H1 (cell line): ENCODE measurements at regions of chr17 and their contacts with region 1.

Region 1: GRCh38 chr17:42577532-42578281 is at the start of gene PSMC3IP:
- DNase-seq: peak; percentile 84 to 94
- H3K4me3 ChIP-seq: peak within 1 kb of the TSS; percentile 80 to 99 (median 90)
- H3K27ac ChIP-seq: peak within 1 kb of the TSS; percentile 79
- H3K4me1 ChIP-seq: no peaks in the 10 kb centered on the region
- H3K27me3 ChIP-seq: no peaks in the 10 kb centered on the region
- CTCF ChIP-seq: peak; percentile 44 to 58 (median 57)
- EP300 ChIP-seq: no peak
- POLR2A ChIP-seq: peak; percentile 60 to 76
- RAD21 ChIP-seq: peak in 1 of 2 experiments; percentile 18; a peak in 1 of 4 replicates
- total RNA-seq, gene PSMC3IP: 21.9 and 22.7 TPM in 2 replicates

Region 2: GRCh38 chr17:42373896-42374295 is 203.8 kb before region 1 on chr17:
- CTCF ChIA-PET with region 1: no interaction called
- POLR2A ChIA-PET with region 1: no interaction called
- DNase-seq: no peak
- H3K4me3 ChIP-seq: no peak overlapping the region
- H3K27ac ChIP-seq: no peak overlapping the region
- H3K4me1 ChIP-seq: peaks cover 0 to 5% (median 1%) of the 10 kb centered on the region in 4 experiments; a peak in 3 of 7 replicates
- H3K27me3 ChIP-seq: no peaks in the 10 kb centered on the region
- CTCF ChIP-seq: no peak
- EP300 ChIP-seq: no peak
- POLR2A ChIP-seq: no peak
- RAD21 ChIP-seq: no peak

Region 3: GRCh38 chr17:42548070-42548837 is 29.5 kb before region 1 on chr17:
- CTCF ChIA-PET with region 1: interaction called, 15 read pairs
- POLR2A ChIA-PET with region 1: interaction called, 4 read pairs
- DNase-seq: peak; percentile 82 to 97
- H3K4me3 ChIP-seq: peak overlapping the region; percentile 31 to 61 (median 37)
- H3K27ac ChIP-seq: no peak overlapping the region
- H3K4me1 ChIP-seq: peaks cover 0 to 8% (median 7%) of the 10 kb centered on the region in 4 experiments; a peak in 5 of 7 replicates
- H3K27me3 ChIP-seq: no peaks in the 10 kb centered on the region
- CTCF ChIP-seq: peak; percentile 75 to 89 (median 77)
- EP300 ChIP-seq: no peak
- POLR2A ChIP-seq: peak; percentile 57 to 62; a peak in 2 of 3 replicates
- RAD21 ChIP-seq: peak; percentile 36 to 48

Region 4: DNA sequence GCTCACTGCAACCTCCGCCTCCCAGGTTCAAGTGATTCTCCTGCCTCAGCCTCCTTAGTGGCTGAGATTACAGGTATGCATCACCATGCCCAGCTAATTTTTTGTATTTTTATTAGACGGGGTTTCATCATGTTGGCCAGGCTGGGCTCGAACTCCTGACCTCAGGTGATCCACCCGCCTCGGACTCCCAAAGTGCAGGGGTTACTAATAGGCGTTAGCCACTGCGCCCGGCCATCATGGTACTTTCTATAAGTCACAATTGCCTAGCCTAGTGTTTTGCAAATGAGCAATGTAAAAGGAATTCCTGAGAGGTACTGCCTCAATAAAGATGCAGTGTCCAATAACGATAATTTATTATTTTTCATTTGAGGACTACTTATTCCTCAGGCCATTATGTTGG is 13.7 kb after region 1 on chr17:
- CTCF ChIA-PET with region 1: interaction called, 15 read pairs
- POLR2A ChIA-PET with region 1: interaction called, 5 read pairs
- DNase-seq: no peak
- H3K4me3 ChIP-seq: no peak overlapping the region
- H3K27ac ChIP-seq: no peak overlapping the region
- H3K4me1 ChIP-seq: no peaks in the 10 kb centered on the region
- H3K27me3 ChIP-seq: no peaks in the 10 kb centered on the region
- CTCF ChIP-seq: no peak
- EP300 ChIP-seq: no peak
- POLR2A ChIP-seq: no peak
- RAD21 ChIP-seq: no peak

Region 5: DNA sequence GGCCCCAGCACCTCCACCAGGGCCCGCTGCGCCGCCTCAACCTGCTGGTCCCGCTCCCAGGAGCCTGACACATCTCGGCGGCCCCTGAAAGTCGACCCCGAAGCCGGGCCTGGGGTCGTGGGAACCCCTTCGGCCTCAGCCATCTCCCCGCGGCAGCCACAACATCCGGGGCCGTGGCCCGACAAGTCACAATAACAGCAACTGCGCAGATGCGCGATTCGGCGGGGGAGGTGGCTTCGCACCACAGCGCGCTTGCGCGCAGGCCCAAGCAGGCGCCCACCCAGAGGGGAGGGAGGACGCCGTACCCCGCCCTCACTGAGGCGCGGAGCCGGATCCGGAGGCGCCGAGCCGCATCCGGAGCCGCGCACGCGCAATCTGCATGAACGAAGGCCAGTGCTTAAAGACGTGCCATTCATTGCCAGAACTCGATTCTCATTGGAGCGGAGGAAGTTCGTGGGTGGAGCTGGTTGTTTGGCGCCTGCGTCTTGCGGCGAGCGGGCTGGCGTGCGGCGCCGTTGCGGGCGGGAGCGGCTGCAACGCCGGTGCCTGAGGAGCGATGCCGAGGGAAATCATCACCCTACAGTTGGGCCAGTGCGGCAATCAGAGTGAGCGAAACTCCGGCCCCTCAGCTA is 31.6 kb after region 1 on chr17 and contains the starts of genes RETREG3 and TUBG1:
- CTCF ChIA-PET with region 1: interaction called, 16 read pairs
- POLR2A ChIA-PET with region 1: interaction called, 12 read pairs
- DNase-seq: peak; percentile 97 to 98
- H3K4me3 ChIP-seq: peak within 1 kb of the TSS; percentile 73 to 98 (median 91)
- H3K27ac ChIP-seq: peak within 1 kb of the TSS; percentile 46; the same call in 1 of the 2 replicates
- H3K4me1 ChIP-seq: peaks cover 0 to 4% (median 2%) of the 10 kb centered on the region in 4 experiments; a peak in 6 of 7 replicates
- H3K27me3 ChIP-seq: no peaks in the 10 kb centered on the region
- CTCF ChIP-seq: peak in 1 of 3 experiments; percentile 12; a peak in 1 of 4 replicates
- EP300 ChIP-seq: no peak
- POLR2A ChIP-seq: peak; percentile 66 to 77
- RAD21 ChIP-seq: peak in 1 of 2 experiments; percentile 31; a peak in 2 of 4 replicates
- total RNA-seq, gene RETREG3: 39.6 and 42.6 TPM in 2 replicates
- total RNA-seq, gene TUBG1: 107 and 109 TPM in 2 replicates

Region 6: GRCh38 chr17:42667123-42667951 is 89.6 kb after region 1 on chr17:
- CTCF ChIA-PET with region 1: interaction called, 16 read pairs
- POLR2A ChIA-PET with region 1: interaction called, 10 read pairs
- DNase-seq: no peak
- H3K4me3 ChIP-seq: no peak overlapping the region
- H3K27ac ChIP-seq: no peak overlapping the region
- H3K4me1 ChIP-seq: peaks cover 0 to 26% (median 19%) of the 10 kb centered on the region in 4 experiments; a peak in 6 of 7 replicates
- H3K27me3 ChIP-seq: peaks cover 2 to 16% (median 12%) of the 10 kb centered on the region in 4 experiments; a peak in 6 of 7 replicates
- CTCF ChIP-seq: no peak
- EP300 ChIP-seq: no peak
- POLR2A ChIP-seq: no peak; a peak in 1 of 3 replicates
- RAD21 ChIP-seq: no peak

Region 7: DNA sequence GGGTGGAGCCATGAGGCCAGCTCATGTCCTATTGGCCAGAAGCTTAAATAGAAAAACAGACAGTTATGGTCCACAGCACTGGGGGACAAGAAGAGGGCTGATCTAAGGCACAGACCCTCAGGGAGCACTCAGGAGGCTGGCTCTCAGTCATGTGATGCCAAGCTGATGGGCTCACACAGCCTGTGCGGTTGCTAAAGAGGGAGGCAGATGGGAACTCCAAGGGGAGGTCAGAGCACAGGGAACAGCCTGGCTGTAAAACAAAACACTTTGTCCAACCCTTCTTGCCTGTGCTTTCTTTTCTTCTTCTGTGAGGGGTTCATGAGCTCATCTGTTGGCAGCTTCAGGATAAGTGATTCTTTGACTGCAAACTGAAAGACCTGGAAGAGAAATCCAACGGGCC is 131.9 kb after region 1 on chr17:
- CTCF ChIA-PET with region 1: interaction called, 10 read pairs
- POLR2A ChIA-PET with region 1: no interaction called
- DNase-seq: no peak
- H3K4me3 ChIP-seq: no peak overlapping the region
- H3K27ac ChIP-seq: no peak overlapping the region
- H3K4me1 ChIP-seq: no peaks in the 10 kb centered on the region
- H3K27me3 ChIP-seq: no peaks in the 10 kb centered on the region
- CTCF ChIP-seq: no peak
- EP300 ChIP-seq: no peak
- POLR2A ChIP-seq: no peak
- RAD21 ChIP-seq: no peak